BJ (cell line): ENCODE measurements at regions of chr12 and their contacts with region 1.

Region 1: GRCh38 chr12:7995266-7995963 is 37.1 kb upstream of the FOXJ2 start:
- DNase-seq: peak; percentile 61
- H3K4me3 ChIP-seq: peak overlapping the region; percentile 17
- H3K27me3 ChIP-seq: no peaks in the 10 kb centered on the region
- CTCF ChIP-seq: peak; percentile 79

Region 2: GRCh38 chr12:7612851-7613250 is 382.6 kb before region 1 on chr12:
- CTCF ChIA-PET with region 1: no interaction called
- POLR2A ChIA-PET with region 1: no interaction called
- DNase-seq: no peak
- H3K4me3 ChIP-seq: no peak overlapping the region
- H3K27me3 ChIP-seq: no peaks in the 10 kb centered on the region; the same call in 1 of the 2 replicates
- CTCF ChIP-seq: no peak

Region 3: GRCh38 chr12:7832059-7832696 is 163.2 kb before region 1 on chr12:
- CTCF ChIA-PET with region 1: interaction called, 11 read pairs
- POLR2A ChIA-PET with region 1: no interaction called
- DNase-seq: no peak
- H3K4me3 ChIP-seq: no peak overlapping the region
- H3K27me3 ChIP-seq: no peaks in the 10 kb centered on the region
- CTCF ChIP-seq: peak; percentile 63

Region 4: GRCh38 chr12:7853557-7853956 is 141.9 kb before region 1 on chr12:
- CTCF ChIA-PET with region 1: interaction called, 11 read pairs
- POLR2A ChIA-PET with region 1: no interaction called
- DNase-seq: no peak
- H3K4me3 ChIP-seq: no peak overlapping the region
- H3K27me3 ChIP-seq: no peaks in the 10 kb centered on the region
- CTCF ChIP-seq: no peak

Region 5: GRCh38 chr12:7859552-7859951 is 135.9 kb before region 1 on chr12:
- CTCF ChIA-PET with region 1: interaction called, 23 read pairs
- POLR2A ChIA-PET with region 1: no interaction called
- DNase-seq: peak; percentile 29
- H3K4me3 ChIP-seq: no peak overlapping the region
- H3K27me3 ChIP-seq: no peaks in the 10 kb centered on the region
- CTCF ChIP-seq: no peak

Region 6: GRCh38 chr12:7872566-7873319 is 122.7 kb before region 1 on chr12 and contains the start of gene SLC2A14:
- CTCF ChIA-PET with region 1: no interaction called
- POLR2A ChIA-PET with region 1: no interaction called
- DNase-seq: no peak
- H3K4me3 ChIP-seq: peak within 1 kb of the TSS; percentile 10
- H3K27me3 ChIP-seq: peaks cover 5% of the 10 kb centered on the region
- CTCF ChIP-seq: no peak
- polyA plus RNA-seq, gene SLC2A14: not detected in 2 replicates

Region 7: GRCh38 chr12:7959701-7960121 is 35.7 kb before region 1 on chr12:
- CTCF ChIA-PET with region 1: interaction called, 16 read pairs
- POLR2A ChIA-PET with region 1: no interaction called
- DNase-seq: no peak
- H3K4me3 ChIP-seq: no peak overlapping the region
- H3K27me3 ChIP-seq: no peaks in the 10 kb centered on the region
- CTCF ChIP-seq: no peak

Region 8: DNA sequence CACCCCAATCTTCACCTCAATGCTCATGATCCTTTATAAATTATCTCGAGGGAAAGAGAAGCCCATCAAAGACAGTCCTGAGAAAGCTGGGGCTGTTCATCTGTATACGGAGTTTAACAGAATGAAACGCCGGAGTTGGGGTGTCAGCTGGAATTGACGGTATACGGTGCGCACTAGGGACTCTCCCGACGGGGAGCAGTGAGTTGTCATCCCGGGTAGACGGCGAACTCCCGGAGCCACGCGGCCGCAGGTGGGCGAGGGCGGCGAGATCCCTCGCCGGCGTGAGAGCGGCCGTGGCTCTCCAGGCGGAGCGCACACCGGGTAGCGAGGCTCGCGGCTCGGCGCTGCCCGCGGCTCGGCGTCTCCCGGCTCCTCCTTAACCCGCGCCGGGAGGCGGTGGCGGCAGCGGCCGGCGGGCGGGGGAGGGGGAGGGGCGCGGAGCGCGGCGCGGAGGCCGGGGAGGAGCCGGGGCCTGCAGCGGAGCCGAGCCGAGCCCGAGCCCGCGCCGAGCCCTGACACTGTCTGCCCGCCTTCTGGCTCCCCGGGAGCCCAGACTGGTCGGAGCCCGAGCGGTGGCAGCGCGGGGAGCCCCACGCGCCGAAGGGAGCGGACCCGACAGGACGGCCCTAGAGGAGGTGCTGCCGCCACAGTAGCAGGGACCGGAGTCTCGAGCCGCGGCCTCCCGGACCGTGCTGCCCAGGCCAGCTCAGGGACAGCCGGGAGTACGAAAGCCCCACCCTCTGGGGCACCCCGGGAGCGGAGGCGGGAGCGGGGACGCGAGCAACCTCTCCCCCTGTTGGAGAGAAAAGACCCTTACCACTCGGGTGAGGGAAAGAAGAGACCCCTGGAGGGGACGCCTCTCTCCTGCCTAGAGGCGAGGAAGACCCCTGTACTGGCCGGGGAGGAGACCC is 37.1 kb after region 1 on chr12 and contains the start of gene FOXJ2:
- CTCF ChIA-PET with region 1: interaction called, 11 read pairs
- POLR2A ChIA-PET with region 1: no interaction called
- DNase-seq: no peak
- H3K4me3 ChIP-seq: peak within 1 kb of the TSS; percentile 85
- H3K27me3 ChIP-seq: no peaks in the 10 kb centered on the region
- CTCF ChIP-seq: peak; percentile 20; the same call in 1 of the 2 replicates
- polyA plus RNA-seq, gene FOXJ2: 5.3 and 6.5 TPM in 2 replicates